ENCODE measurements at regions of chr10 and their contacts with region 1.

Region 1: DNA sequence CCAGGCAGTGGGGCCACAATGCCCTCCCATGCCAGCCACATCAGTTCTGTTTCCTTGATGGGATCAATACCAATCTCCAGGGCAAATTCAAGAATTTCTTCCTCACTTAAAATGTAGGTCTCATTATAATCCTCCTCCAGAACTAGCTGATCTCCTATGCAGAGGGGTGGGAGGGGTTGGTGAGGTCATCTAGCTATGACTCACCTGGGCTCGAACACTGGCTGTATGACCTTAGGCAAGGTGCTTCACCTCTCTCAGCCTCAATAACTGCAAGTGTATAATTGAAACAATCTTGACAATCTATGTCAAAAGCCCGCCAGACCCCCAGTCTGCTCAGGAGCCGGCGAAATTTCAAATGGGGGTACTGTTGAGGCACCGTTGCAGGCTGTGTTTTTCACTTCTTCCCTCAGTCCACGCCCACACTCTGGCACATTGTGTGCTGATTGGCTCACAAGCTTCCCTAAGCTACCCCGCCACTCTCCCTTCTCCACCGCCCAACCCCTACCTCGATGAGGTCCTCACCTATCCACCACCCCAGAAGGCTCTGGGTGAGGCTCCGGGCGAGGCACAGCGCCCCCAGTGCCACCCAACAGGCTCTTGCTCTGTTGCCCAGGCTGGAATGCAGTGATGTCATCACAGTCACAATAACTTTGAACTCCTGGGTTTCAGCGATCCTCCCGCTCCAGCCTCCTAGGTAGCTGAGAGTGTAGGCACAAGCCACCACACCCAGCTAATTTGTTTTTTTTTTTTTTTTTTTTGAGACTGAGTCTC is 70.5 kb downstream of the ZNF22 start:
- DNase-seq: no peak
- H3K4me3 ChIP-seq: no peak overlapping the region
- H3K4me3 Mint-ChIP-seq: no peak overlapping the region
- H3K27ac ChIP-seq: no peak overlapping the region
- H3K27ac Mint-ChIP-seq: peak overlapping the region in 1 of 7 donors; percentile 11
- H3K4me1 ChIP-seq: no peaks in the 10 kb centered on the region
- H3K4me1 Mint-ChIP-seq: peaks cover 5% of the 10 kb centered on the region
- H3K27me3 ChIP-seq: peaks cover 0 to 3% of the 10 kb centered on the region in 2 donors
- H3K27me3 Mint-ChIP-seq: peaks cover 2 to 7% (median 3%) of the 10 kb centered on the region in 3 donors
- CTCF ChIP-seq: no peak

Region 2: DNA sequence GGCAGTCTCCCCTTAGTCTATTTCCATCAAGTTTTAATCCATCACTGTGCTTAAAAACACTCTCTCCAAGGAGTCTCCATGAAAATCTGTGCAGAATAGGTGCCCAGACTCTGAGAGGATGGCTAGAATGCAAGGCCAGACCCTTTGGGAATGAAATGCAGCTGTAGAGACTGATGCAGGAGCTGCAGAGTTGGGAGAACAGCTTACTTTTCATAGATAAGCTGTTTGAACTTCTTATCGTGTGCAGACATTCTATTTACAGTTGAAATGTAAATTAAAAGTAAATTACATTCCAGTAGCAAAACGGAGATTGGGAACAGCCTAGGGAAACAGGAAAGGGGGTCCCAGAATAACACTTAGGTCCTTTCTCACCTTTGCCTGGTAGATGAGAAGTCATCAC is 55.6 kb before region 1 on chr10:
- intact Hi-C with region 1: loop called in 1 of 2 experiments (anchors 10 kb)
- DNase-seq: no peak
- H3K4me3 ChIP-seq: no peak overlapping the region
- H3K4me3 Mint-ChIP-seq: no peak overlapping the region
- H3K27ac ChIP-seq: no peak overlapping the region
- H3K27ac Mint-ChIP-seq: no peak overlapping the region
- H3K4me1 ChIP-seq: no peaks in the 10 kb centered on the region
- H3K4me1 Mint-ChIP-seq: no peaks in the 10 kb centered on the region
- H3K27me3 ChIP-seq: no peaks in the 10 kb centered on the region
- H3K27me3 Mint-ChIP-seq: peaks cover 0 to 1% (median 0%) of the 10 kb centered on the region in 3 donors
- CTCF ChIP-seq: no peak

Measured in CD14-positive monocyte (primary cell).